Activated B cell treated with CpG ODN at 0.5 μM for 24 hours (primary cell): ENCODE measurements at regions of chr11 and their contacts with region 1.

Region 1: DNA sequence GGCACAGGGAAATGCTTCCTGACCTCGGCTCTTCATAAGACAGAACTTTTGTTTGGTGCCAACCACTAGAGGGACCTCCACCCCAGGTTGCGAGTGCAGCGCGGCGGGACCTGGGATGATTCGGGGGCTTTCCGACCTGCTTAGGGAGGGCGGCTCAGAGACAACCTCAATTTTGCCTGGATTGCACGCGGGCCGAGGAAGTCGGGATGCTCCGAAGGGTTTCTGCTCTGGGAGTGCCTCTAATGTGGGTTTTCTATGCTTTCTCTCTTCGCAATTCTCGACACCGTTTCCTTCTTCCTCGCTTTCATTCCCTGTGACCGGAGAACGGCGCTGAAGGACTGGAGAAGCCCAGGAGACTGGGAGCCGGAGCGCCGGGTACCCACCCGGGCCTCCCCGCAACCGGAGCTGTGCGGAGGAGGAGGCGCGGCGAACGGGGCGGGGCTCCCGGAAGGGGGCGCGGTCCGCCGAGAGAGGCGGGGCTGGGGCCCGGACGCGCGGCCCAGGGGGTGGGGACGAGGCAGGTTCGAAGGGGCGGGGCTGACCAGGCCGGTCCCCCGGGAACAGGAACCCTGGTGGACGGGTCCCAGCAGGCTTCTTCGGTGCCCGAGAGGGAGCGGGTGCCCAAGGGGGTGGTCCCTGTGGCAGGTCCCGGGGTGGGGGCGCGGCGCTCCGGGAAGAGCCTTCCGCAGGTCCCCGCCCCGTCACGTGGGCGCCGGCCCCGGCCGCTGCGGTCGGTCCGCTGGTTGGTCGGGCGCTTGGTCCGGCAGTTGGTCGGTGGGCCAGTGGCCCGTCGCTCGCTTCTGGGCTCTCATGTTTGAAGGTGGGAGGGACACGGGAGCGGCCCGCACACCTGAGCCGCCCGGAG is at the start of gene PPFIBP2:
- DNase-seq: peak; percentile 94
- ATAC-seq: peak; percentile 69
- H3K4me3 Mint-ChIP-seq: peak within 1 kb of the TSS; percentile 92
- H3K27ac Mint-ChIP-seq: peak within 1 kb of the TSS; percentile 97
- H3K4me1 Mint-ChIP-seq: peaks cover 47% of the 10 kb centered on the region
- H3K27me3 Mint-ChIP-seq: no peaks in the 10 kb centered on the region
- CTCF ChIP-seq: no peak
- total RNA-seq, gene PPFIBP2: 109 and 112 TPM in 2 replicates

Region 2: GRCh38 chr11:5624489-5625279 is 1888.8 kb before region 1 on chr11 and contains the start of gene TRIM34:
- CTCF ChIA-PET with region 1: no interaction called
- POLR2A ChIA-PET with region 1: no interaction called
- intact Hi-C with region 1: loop called (anchors 10 kb)
- DNase-seq: peak; percentile 35
- ATAC-seq: peak; percentile 98
- H3K4me3 Mint-ChIP-seq: peak within 1 kb of the TSS; percentile 94
- H3K27ac Mint-ChIP-seq: peak within 1 kb of the TSS; percentile 96
- H3K4me1 Mint-ChIP-seq: peaks cover 46% of the 10 kb centered on the region
- H3K27me3 Mint-ChIP-seq: no peaks in the 10 kb centered on the region
- CTCF ChIP-seq: no peak
- total RNA-seq, gene TRIM34: 25.9 and 28.7 TPM in 2 replicates

Region 3: DNA sequence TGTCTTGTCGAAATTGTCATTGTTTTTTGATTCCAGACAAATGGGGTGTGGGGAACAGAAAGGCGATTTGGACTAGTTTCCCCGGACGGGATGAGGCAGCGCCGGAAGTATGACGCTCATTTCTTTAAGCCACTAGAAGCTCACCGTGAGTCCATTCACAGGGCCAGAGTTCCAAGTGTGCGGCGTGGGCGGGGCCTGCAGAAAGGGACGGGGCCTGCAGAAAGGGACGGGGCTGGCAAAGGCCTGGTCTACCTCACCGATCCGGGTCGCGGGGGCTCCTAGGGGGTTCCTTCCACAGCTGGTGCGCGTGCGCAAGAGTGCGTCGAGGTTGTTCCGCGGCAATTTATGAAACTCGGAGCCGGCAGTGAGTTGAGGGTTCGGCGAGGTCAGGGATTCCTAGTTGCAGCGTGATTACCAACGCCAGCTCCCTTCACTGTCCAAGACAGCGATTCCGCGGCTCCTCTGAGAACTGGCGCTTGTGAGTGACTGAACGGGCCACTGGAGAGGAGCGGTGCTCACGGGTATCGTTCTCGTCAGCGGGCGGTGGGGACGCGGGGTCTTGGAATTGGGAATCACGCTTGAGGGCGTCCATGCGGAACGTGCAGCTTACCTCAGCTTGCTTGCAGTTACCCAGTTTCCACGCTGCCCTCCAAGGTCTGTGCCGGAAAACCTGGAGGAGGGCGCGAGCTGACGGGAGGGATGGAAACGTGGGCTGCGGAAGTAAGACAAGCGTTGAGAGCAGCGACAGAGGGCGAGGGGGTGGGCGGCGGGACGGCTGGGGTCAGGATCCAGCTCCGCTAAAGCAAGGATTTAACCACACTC is 587.0 kb before region 1 on chr11 and contains the start of gene ZNF215:
- CTCF ChIA-PET with region 1: no interaction called
- POLR2A ChIA-PET with region 1: no interaction called
- intact Hi-C with region 1: loop called (anchors 10 kb)
- DNase-seq: peak; percentile 43
- ATAC-seq: peak; percentile 76
- H3K4me3 Mint-ChIP-seq: peak within 1 kb of the TSS; percentile 93
- H3K27ac Mint-ChIP-seq: peak within 1 kb of the TSS; percentile 81
- H3K4me1 Mint-ChIP-seq: peaks cover 19% of the 10 kb centered on the region
- H3K27me3 Mint-ChIP-seq: no peaks in the 10 kb centered on the region
- CTCF ChIP-seq: no peak
- total RNA-seq, gene ZNF215: 5.3 and 5.4 TPM in 2 replicates

Region 4: GRCh38 chr11:7473717-7474116 is 39.7 kb before region 1 on chr11:
- CTCF ChIA-PET with region 1: no interaction called
- POLR2A ChIA-PET with region 1: interaction called, 17 read pairs
- intact Hi-C with region 1: loop called (anchors 1 kb)
- DNase-seq: peak; percentile 31
- ATAC-seq: peak; percentile 99
- H3K4me3 Mint-ChIP-seq: peak overlapping the region; percentile 47
- H3K27ac Mint-ChIP-seq: peak overlapping the region; percentile 74
- H3K4me1 Mint-ChIP-seq: peaks cover 29% of the 10 kb centered on the region
- H3K27me3 Mint-ChIP-seq: no peaks in the 10 kb centered on the region
- CTCF ChIP-seq: no peak

Region 5: DNA sequence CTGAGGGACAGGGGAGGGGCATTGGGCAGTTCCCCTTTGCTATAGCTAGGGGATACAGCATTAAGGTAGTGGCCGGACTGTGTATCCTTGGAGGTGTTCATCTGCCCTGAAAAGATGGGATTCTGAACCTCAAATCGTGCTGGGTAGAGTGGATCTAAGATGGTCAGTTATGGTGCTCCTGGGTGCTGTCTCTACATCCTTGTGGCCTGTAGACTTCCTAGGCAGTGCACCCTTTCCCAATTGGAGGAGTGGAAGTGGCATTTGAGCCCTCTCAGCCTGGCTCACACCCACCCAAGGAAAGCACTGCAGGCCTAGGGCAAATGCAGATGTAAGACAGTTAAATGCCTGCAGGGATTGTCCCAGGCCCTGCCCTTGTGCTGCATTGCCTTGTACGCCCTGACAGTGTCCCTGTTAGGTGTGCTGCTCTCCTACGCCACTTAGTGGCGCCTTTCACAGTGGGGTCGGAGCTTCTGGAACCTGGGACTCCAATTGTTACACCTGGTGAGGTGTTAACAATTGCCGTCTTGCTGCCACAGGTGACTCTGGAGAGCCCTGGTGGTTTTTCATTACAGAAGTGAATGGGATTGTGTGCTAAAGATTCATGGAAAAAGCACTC is 35.3 kb after region 1 on chr11:
- CTCF ChIA-PET with region 1: interaction called, 13 read pairs
- POLR2A ChIA-PET with region 1: interaction called, 6 read pairs
- intact Hi-C with region 1: loop called (anchors 1 kb)
- DNase-seq: no peak
- ATAC-seq: peak; percentile 89
- H3K4me3 Mint-ChIP-seq: no peak overlapping the region
- H3K27ac Mint-ChIP-seq: no peak overlapping the region
- H3K4me1 Mint-ChIP-seq: peaks cover 10% of the 10 kb centered on the region
- H3K27me3 Mint-ChIP-seq: no peaks in the 10 kb centered on the region
- CTCF ChIP-seq: no peak

Region 6: DNA sequence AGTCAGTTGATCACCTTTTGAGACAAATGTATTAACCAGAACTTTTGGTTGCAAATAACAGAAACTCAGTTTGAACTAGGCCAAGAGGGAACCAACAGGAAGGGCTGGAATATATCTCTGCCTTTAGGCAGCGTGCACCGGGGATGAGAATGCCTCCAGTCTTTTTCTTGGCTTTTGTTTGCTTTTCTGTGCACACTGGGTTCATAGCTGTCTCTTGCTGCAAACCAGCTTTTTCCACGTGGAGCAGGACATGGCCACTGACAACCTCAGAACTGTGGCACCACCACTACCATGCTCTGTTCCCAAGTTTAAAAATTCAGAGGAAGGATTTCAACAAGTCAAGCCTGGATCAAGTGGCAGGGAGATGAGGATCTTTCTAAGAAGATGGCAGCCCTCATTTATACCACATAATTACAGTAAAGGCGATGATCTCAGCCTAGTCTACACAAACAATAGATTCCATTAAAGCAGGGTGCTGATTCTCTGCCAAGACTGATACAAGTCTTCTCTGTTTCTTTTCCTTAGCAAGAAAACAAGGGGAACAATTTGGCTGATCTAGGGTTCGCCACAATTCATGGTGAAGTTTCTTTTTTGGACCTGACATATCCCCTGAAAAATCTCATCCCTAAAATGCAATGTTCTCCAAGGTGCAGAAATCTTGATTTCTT is 74.1 kb after region 1 on chr11:
- CTCF ChIA-PET with region 1: no interaction called
- POLR2A ChIA-PET with region 1: no interaction called
- intact Hi-C with region 1: no loop called
- DNase-seq: no peak
- ATAC-seq: no peak
- H3K4me3 Mint-ChIP-seq: no peak overlapping the region
- H3K27ac Mint-ChIP-seq: no peak overlapping the region
- H3K4me1 Mint-ChIP-seq: peaks cover 11% of the 10 kb centered on the region
- H3K27me3 Mint-ChIP-seq: no peaks in the 10 kb centered on the region
- CTCF ChIP-seq: no peak

Region 7: DNA sequence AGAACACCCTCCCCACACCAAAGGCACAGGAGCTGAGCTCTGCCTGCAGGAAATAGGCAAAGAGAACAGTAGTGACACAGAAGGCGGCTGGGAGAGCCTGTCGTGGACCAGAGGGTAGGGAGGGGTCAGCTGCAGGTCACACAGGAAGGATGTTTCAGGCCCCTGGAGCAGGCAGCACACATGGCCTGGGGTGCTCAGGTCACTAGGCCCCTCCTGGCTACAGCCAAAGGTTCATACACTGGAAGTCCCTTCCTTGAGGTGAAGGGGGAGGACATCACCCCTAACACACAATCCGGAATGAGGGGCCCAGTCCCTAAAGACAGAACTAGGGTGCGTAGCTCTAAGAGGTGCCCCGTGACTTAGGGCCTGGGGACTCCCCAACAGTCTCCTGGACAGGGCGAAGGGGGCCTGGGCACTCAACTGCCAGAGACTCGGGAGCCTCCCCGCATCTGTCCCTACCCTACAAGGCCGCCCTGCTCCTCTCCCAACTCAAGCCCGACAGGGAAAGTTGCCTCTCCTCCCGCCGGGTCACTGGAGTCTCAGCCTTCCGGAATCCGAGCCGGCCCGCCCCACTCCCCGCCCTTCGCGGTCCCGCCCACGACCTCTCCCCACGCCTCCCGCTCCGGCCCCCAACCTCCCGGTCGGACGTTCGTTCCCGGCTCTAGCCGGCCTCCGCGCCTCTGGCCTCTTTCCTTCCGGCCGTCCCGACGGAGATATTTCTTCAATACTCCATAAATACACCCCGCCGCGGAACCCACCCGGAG is 159.7 kb after region 1 on chr11 and contains the start of gene CYB5R2:
- CTCF ChIA-PET with region 1: no interaction called
- POLR2A ChIA-PET with region 1: interaction called, 19 read pairs
- intact Hi-C with region 1: no loop called
- DNase-seq: peak; percentile 34
- ATAC-seq: peak; percentile 36
- H3K4me3 Mint-ChIP-seq: peak within 1 kb of the TSS; percentile 85
- H3K27ac Mint-ChIP-seq: peak within 1 kb of the TSS; percentile 86
- H3K4me1 Mint-ChIP-seq: peaks cover 52% of the 10 kb centered on the region
- H3K27me3 Mint-ChIP-seq: peaks cover 17% of the 10 kb centered on the region
- CTCF ChIP-seq: no peak
- total RNA-seq, gene CYB5R2: 22.3 and 25.9 TPM in 2 replicates

Region 8: DNA sequence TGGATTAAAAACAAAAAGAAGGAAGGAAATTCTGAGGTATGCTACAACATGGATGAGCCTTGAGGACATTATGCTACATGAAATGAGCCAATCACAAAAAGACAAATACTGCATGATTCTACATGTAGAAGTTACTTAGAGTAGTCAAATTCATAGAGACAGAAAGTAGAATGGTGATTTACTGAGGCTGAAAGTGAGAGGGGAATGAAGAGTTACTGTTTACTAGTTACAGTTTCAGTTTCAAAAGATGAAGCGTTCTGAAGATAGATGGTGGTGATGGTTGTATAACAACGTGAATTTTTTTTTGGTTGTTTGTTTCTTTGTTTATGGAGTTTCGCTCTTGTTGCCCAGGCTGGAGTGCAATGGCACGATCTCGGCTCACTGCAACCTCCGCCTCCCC is 273.8 kb after region 1 on chr11:
- CTCF ChIA-PET with region 1: no interaction called
- POLR2A ChIA-PET with region 1: no interaction called
- intact Hi-C with region 1: no loop called
- DNase-seq: no peak
- ATAC-seq: no peak
- H3K4me3 Mint-ChIP-seq: no peak overlapping the region
- H3K27ac Mint-ChIP-seq: no peak overlapping the region
- H3K4me1 Mint-ChIP-seq: no peaks in the 10 kb centered on the region
- H3K27me3 Mint-ChIP-seq: no peaks in the 10 kb centered on the region
- CTCF ChIP-seq: no peak

Region 9: DNA sequence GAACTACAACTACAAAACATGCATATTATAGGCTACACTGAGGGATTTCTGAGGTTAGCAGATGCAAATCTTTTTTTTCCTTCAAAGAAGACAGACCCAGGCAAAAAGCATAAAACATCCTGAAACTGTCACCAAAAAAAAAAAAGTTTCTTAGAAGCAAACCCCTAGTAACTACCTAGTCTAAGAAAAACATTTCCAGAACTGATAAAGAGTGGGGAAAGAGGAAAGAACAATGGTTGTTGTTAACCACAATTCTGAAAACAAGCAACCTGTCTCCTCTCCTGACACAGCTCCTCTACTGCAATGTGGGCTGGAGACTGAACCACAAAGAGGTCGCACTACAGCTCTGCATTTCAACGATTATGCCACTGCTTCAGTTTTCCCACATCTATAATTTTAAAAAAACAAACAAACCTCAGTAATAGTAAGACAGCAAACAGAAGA is 1736.7 kb after region 1 on chr11:
- CTCF ChIA-PET with region 1: no interaction called
- POLR2A ChIA-PET with region 1: no interaction called
- intact Hi-C with region 1: no loop called
- DNase-seq: no peak
- ATAC-seq: no peak
- H3K4me3 Mint-ChIP-seq: peak overlapping the region; percentile 1
- H3K27ac Mint-ChIP-seq: no peak overlapping the region
- H3K4me1 Mint-ChIP-seq: peaks cover 41% of the 10 kb centered on the region
- H3K27me3 Mint-ChIP-seq: no peaks in the 10 kb centered on the region
- CTCF ChIP-seq: no peak